ENCODE measurements at regions of chr6 and their contacts with region 1.

Region 1: DNA sequence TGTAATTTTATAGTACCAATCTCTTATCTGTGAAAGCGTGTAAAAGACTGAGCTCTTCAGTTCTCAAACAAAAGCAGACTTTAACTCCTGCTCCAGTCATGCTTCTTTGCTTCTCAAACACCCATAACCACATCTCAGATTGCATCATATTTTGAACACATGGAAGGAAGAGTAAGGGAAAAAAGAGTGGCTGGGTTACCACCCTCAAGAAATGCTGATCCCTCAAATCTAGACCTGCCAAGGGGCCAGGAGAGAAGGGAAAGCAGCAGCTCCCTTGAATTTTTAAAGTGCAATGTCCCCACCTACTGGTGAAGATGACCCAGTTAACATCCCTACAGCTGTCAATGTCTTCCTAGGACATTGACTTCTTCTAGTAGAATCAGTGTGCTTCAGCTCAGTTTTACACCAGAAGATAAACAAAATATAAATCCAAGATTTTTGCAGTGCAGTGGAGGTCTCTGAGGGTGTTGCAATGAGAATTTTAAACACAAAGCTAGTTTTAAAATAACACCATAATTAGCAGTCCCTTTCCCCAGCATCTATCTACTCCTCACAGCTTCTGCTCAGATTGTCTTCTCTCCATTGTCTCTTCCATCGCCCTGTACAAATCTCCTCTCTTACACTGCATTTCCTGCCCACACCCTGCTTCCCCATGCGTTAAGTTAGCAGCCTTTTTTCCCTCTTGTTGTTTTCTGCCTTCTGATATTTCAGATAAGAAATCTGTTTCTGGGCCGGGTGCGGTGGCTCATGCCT is 22.6 kb upstream of the HLA-DQB2 start:
- DNase-seq: peak; percentile 75
- ATAC-seq: peak; percentile 97
- H3K4me3 ChIP-seq: no peak overlapping the region
- H3K27ac ChIP-seq: no peak overlapping the region
- H3K4me1 ChIP-seq: no peaks in the 10 kb centered on the region
- H3K27me3 ChIP-seq: peaks cover 20% of the 10 kb centered on the region; the same call in 1 of the 2 replicates
- CTCF ChIP-seq: peak; percentile 67

Region 2: GRCh38 chr6:32244946-32245398 is 541.0 kb before region 1 on chr6:
- CTCF ChIA-PET with region 1: interaction called, 4 read pairs
- POLR2A ChIA-PET with region 1: no interaction called
- intact Hi-C with region 1: loop called (anchors 10 kb)
- DNase-seq: peak; percentile 83
- ATAC-seq: peak; percentile 92
- H3K4me3 ChIP-seq: peak overlapping the region; percentile 17; the same call in 1 of the 2 replicates
- H3K27ac ChIP-seq: no peak overlapping the region
- H3K4me1 ChIP-seq: 0 out of 2 replicates have a peak, but pooled peaks cover 5% of the 10 kb centered on the region
- H3K27me3 ChIP-seq: no peaks in the 10 kb centered on the region
- CTCF ChIP-seq: peak; percentile 94

Region 3: DNA sequence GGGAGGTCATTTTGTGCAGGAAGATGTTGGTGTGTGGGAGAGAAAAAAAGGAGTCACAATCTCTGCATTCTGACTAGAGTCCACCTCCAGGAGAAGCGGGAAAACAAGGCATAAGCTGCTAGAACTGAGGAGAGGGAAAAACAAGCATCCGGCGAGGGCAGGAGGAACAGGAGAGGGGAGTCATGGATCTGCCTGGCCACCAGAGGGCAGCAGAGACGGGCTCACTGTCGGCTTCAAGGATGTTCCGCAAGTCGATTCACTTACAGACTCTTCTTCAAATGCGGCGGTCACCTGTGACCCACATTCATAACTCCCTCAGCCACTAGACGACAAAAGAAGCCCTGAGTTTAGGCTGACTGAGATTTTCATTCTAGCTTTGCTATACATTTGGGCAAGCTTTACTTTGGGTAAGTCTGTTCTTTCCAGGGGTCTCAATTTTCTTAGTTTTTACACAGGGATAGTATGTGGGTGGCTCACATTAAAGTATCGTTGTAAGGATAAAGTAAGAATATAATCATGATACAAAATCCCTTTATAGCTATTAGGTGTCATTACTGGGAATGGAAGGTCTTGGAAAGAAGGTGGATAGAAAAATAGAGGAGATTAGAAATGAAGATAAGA is 372.4 kb before region 1 on chr6:
- CTCF ChIA-PET with region 1: no interaction called
- POLR2A ChIA-PET with region 1: no interaction called
- intact Hi-C with region 1: loop called (anchors 2 kb)
- DNase-seq: peak; percentile 83
- ATAC-seq: peak; percentile 79
- H3K4me3 ChIP-seq: peak overlapping the region; percentile 43; the same call in 1 of the 2 replicates
- H3K27ac ChIP-seq: no peak overlapping the region
- H3K4me1 ChIP-seq: peaks cover 4% of the 10 kb centered on the region; the same call in 1 of the 2 replicates
- H3K27me3 ChIP-seq: peaks cover 9% of the 10 kb centered on the region
- CTCF ChIP-seq: peak; percentile 92

Region 4: DNA sequence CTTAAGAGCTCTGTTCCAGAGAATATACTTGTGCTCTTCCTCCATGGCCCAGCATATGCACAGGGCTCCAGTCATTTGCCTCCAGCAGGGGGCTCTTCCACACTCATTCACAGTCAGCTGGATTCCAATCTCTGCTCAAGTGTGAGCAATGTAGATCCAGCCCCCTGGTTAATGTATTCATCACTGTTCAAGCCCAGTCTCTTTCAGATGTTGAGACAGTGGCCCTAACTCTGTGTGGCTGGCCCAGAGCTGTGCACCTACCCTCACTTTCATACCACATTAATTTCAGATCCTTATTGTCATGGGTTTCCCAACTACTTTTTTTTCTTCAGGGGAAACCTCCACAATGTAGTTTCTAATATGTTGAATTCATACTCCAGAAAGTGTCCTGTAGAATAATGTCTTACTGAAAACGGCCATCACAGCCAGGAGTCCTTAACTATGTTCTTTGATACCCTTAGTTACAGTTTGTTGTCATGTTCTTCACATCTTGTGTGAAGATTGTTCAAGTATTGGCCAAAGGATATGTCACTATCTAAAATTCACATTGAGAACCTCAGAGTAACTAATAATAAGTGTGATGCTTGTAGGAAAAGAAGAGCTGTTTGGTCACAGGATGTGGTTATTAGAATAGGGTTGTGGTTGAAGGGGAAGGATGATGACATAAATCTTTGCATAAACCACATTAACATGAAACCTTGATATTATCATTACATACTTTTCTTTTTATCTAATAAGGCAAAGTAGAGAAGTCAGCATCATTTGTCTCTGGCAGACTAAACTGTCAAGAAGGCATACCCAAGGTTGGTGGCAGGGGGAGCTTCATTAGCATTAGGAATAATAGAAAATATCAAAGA is 163.2 kb before region 1 on chr6:
- CTCF ChIA-PET with region 1: no interaction called
- POLR2A ChIA-PET with region 1: no interaction called
- intact Hi-C with region 1: loop called (anchors 1 kb)
- DNase-seq: peak; percentile 18
- ATAC-seq: peak; percentile 64
- H3K4me3 ChIP-seq: no peak overlapping the region
- H3K27ac ChIP-seq: no peak overlapping the region
- H3K4me1 ChIP-seq: no peaks in the 10 kb centered on the region
- H3K27me3 ChIP-seq: no peaks in the 10 kb centered on the region
- CTCF ChIP-seq: peak; percentile 47; the same call in 1 of the 2 replicates

Region 5: DNA sequence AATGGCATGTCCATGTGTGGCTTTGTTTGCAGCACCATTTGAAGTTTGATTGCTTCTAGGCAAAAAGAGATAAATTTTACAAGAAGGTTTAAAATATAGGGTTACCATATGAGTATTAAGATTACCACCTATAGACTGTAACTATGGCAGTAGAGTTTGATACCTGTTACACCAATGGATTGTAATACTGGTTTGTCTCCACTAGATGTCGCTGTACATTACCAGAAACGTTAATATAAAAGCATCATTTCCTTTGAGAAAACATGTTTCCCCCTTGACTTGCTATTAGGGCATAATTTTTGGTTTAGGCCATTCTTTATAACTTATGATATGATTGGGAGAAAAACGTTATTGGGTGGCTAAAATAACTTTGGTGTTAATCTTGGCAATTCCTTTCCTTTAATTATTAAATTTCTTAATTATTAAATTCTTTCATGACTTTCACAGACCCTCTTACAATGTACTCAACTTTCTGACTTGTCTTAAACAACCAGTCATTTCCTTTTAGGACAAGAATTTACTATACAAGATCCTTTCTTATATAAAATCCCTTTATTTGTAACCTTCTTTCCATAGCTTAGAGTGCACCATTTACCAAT is 332.7 kb after region 1 on chr6:
- CTCF ChIA-PET with region 1: no interaction called
- POLR2A ChIA-PET with region 1: no interaction called
- intact Hi-C with region 1: no loop called
- DNase-seq: peak; percentile 77
- ATAC-seq: no peak
- H3K4me3 ChIP-seq: no peak overlapping the region
- H3K27ac ChIP-seq: no peak overlapping the region
- H3K4me1 ChIP-seq: no peaks in the 10 kb centered on the region
- H3K27me3 ChIP-seq: peaks cover 60% of the 10 kb centered on the region
- CTCF ChIP-seq: peak; percentile 77

Measured in PC-3 (cell line).